Sigmoid colon (tissue), 7 donors: ENCODE measurements at regions of chr10 and their contacts with region 1.

Region 1: DNA sequence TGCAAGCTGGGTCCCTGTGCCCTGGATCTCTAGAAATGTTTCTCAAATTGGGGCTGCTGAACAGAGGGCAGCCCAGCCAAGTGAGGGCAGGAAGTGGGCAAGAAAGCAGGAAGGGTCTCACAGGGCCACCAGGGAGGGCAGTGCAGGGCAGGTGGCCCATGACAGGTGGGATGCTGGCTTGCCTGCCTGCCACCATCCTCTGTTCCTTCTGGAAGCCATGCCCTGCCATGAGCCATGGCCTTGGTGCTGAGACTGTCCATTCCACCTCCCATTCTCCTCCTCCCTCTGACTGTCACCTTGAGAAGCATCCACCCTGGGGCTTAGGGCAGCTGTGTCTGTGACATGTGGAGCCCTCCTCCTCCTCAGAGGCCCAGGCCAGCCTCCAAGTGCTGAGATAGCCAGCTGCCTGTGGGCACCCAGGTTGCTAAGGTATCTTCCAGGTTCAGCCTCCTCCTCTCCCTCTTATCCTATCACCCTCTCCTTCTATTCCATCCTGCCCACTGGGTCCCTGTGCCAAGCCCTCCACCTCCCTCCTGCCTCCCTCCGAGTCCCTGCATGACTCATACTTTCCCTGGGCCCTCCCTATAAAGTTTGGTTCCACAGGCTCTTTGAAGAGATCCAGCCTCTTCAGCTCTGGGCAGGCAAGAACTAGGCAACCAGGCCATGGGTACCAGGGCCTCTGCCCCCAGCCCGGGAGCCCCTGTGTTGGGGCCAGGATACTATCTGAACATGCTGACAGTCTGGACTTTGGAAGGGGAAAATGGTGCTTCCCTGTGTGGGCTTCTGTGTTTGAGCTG is 1.3 kb downstream of the VSIR start:
- DNase-seq: peak; percentile 96
- H3K4me3 ChIP-seq: peak overlapping the region; percentile 67 to 87 (median 70)
- H3K27ac ChIP-seq: peak overlapping the region; percentile 89 to 98 (median 92)
- H3K4me1 ChIP-seq: peaks cover 0 to 75% (median 65%) of the 10 kb centered on the region in 4 donors
- H3K27me3 ChIP-seq: no peaks in the 10 kb centered on the region
- CTCF ChIP-seq: no peak
- EP300 ChIP-seq: peak in 2 of 4 donors; percentile 43 to 46
- POLR2A ChIP-seq: peak; percentile 51 to 53

Region 2: DNA sequence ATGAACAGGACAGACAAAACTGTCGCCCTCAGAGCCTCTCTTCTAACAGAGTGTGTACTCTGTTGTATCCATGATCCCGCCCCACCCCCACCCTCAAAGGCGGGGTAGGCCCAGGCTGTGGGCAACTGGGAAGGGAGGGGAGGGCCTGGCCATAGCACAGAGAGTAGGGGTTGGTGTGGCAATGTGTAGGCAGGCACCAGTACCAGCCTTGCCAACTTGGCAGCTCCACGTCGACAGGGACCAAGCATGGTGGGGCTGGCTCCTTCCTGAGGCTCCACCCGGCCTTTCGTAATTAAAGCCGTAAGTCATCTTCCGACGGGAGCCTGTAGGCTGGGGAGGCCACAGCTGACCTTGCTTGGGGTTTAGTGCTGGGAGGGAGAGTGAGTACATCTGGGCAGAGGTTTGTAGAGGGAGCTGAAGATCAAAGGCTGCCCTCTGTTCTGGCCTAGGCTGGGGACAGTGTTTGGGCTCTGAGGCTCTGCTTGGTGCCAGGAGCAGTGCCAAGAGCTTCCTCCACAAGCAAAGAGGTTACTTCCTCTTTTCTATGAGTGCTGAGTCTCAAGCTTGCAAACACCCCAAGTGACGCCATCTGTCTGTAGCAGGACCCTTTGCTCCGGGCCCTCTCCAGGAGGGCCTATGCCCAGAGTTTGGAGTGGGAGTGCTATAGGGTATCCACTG is 174.1 kb before region 1 on chr10:
- intact Hi-C with region 1: loop called (anchors 10 kb)
- DNase-seq: peak; percentile 78
- H3K4me3 ChIP-seq: no peak overlapping the region
- H3K27ac ChIP-seq: peak overlapping the region; percentile 48 to 73 (median 67)
- H3K4me1 ChIP-seq: peaks cover 0 to 14% (median 10%) of the 10 kb centered on the region in 4 donors
- H3K27me3 ChIP-seq: no peaks in the 10 kb centered on the region
- CTCF ChIP-seq: no peak
- EP300 ChIP-seq: no peak
- POLR2A ChIP-seq: no peak

Region 3: DNA sequence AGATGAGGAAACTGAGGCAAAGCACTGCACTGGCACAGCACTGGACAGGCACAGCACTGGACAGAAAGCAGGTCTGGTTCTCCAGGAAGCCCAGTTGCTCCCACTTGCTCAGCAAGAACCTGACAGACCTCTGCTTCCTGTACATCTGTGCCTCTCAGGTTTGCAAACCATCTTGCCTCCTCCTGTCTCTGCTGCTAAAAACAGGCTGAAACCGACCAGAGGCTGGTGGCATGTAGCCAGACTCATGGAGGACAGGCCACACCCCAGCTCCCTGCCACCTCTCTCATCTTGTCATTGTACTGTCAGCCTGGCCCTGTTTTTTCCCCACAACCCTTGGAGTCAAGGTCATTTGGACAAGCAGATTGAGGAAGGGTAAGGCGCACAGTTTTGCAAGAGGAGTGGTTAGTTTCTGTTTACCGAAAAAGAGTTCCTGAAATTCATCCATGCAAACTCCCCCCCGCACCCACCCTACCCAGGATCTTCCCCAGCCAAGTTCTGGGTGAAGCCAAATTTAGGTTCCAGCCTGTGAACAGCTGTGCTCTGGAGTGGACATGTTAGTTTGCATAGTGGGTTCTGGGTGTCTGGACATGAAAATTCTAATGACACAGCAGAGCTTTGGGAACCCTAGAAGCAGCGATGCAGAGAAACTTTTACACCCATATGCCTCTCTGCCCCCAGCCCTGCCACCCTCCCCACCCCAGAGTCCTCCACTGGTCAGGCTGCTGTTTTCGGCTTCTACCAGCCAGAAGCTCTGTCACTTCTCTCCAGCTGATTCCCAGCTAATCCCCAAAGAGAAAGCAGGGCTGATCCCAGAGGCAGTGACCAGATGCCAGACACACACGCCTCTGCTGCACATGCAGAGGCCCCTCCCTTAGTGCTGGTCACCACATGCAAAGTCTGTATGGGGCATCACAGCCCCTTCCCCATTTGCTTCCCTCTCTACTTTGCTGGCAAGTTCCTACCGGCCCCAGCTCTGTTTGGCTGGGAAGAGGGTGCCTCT is 44.0 kb before region 1 on chr10:
- intact Hi-C with region 1: loop called (anchors 5 kb)
- DNase-seq: peak; percentile 87
- H3K4me3 ChIP-seq: no peak overlapping the region
- H3K27ac ChIP-seq: peak overlapping the region; percentile 73 to 82 (median 76)
- H3K4me1 ChIP-seq: peaks cover 0 to 38% (median 32%) of the 10 kb centered on the region in 4 donors
- H3K27me3 ChIP-seq: no peaks in the 10 kb centered on the region
- CTCF ChIP-seq: no peak
- EP300 ChIP-seq: no peak
- POLR2A ChIP-seq: no peak

Region 4: DNA sequence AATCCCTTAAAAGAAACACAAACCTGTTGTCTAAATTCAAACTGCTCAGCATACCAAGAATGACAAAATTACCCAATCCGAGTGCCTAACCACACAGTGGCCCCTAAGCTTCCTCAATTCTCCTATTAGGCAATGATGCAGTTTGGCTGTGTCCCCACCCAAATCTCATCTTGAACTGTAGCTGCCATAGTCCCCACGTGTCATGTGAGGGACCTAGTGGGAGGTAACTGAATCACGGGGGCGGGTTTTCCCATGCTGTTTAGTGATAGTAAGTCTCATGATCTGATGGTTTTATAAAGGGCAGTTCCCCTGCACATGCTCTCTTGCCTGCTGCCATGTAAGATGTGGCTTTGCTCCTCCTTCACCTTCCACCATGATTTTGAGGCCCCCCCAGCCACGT is 57.2 kb after region 1 on chr10:
- intact Hi-C with region 1: no loop called
- DNase-seq: peak; percentile 84
- H3K4me3 ChIP-seq: no peak overlapping the region
- H3K27ac ChIP-seq: no peak overlapping the region
- H3K4me1 ChIP-seq: peaks cover 0 to 16% (median 4%) of the 10 kb centered on the region in 4 donors
- H3K27me3 ChIP-seq: no peaks in the 10 kb centered on the region
- CTCF ChIP-seq: no peak
- EP300 ChIP-seq: no peak
- POLR2A ChIP-seq: no peak